ENCODE measurements at regions of chr13 and their contacts with region 1.

Region 1: GRCh38 chr13:49652355-49653305 is 24.3 kb downstream of the ARL11 start:
- DNase-seq: peak in 4 of 14 experiments; percentile 11 to 41 (median 33)
- ATAC-seq: peak; percentile 32
- H3K4me3 ChIP-seq: no peak overlapping the region
- H3K4me3 Mint-ChIP-seq: no peak overlapping the region
- H3K27ac ChIP-seq: no peak overlapping the region
- H3K27ac Mint-ChIP-seq: no peak overlapping the region
- H3K4me1 ChIP-seq: no peaks in the 10 kb centered on the region
- H3K4me1 Mint-ChIP-seq: no peaks in the 10 kb centered on the region
- H3K27me3 ChIP-seq: no peaks in the 10 kb centered on the region
- H3K27me3 Mint-ChIP-seq: no peaks in the 10 kb centered on the region
- CTCF ChIP-seq: no peak

Region 2: GRCh38 chr13:49840266-49840665 is 187.6 kb after region 1 on chr13:
- CTCF ChIA-PET with region 1: no interaction called
- POLR2A ChIA-PET with region 1: no interaction called
- intact Hi-C with region 1: loop called in 1 of 2 experiments (anchors 5 kb)
- DNase-seq: no peak
- ATAC-seq: no peak
- H3K4me3 ChIP-seq: no peak overlapping the region
- H3K4me3 Mint-ChIP-seq: no peak overlapping the region
- H3K27ac ChIP-seq: no peak overlapping the region
- H3K27ac Mint-ChIP-seq: no peak overlapping the region
- H3K4me1 ChIP-seq: no peaks in the 10 kb centered on the region
- H3K4me1 Mint-ChIP-seq: no peaks in the 10 kb centered on the region
- H3K27me3 ChIP-seq: no peaks in the 10 kb centered on the region
- H3K27me3 Mint-ChIP-seq: no peaks in the 10 kb centered on the region
- CTCF ChIP-seq: no peak